Endothelial cell of umbilical vein (primary cell): ENCODE measurements at regions of chrX and their contacts with region 1.

Region 1: DNA sequence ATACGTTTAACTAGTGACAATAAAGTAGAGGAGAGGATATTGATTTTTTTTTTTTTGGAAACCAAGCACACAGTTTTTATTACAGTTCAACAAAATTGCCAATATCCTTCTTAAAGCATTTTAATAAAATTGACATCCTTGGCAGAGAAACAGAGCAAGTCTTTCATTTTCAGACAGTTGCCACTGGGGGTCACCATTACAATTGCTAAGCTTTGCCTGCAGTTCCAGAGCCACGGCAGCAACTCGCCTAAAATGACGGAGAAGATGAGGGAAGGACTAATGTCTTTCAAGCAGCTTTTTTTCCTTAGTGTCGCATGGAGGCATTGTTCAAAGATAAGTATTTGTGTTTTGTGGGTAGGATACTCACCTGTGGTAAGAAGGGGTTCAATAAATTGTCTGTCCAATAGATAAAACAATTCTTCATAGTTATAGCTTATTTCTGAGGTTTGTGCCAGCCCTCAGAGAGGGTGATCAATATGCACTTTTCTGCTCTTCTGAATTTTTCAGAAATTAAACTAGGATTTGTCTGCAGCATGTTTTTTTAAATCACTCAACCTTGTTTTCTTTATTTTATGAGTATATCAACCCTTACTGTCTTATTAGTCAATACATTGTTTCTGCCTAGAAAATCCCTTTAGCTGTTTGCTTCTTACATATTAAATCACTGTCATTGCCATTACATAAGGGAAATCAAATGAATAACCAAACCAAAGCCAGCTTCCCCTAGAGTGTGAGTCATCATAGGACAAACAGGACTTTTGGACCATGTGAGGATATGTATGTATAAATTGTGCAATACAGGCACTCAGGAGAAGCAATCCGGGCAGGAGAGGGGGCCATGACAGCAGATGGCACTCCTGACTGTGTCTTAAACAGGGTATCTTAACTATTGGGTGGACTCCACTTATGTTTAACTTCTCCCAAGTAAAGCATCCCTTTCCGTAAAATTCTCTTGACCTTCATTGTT is 508.1 kb upstream of the ARX start:
- DNase-seq: peak; percentile 90
- H3K4me3 ChIP-seq: peak overlapping the region in 2 of 3 experiments; percentile 13 to 43
- H3K27ac ChIP-seq: peak overlapping the region; percentile 90
- H3K4me1 ChIP-seq: peaks cover 22% of the 10 kb centered on the region
- H3K27me3 ChIP-seq: no peaks in the 10 kb centered on the region
- CTCF ChIP-seq: peak; percentile 30 to 35
- POLR2A ChIP-seq: no peak

Region 2: DNA sequence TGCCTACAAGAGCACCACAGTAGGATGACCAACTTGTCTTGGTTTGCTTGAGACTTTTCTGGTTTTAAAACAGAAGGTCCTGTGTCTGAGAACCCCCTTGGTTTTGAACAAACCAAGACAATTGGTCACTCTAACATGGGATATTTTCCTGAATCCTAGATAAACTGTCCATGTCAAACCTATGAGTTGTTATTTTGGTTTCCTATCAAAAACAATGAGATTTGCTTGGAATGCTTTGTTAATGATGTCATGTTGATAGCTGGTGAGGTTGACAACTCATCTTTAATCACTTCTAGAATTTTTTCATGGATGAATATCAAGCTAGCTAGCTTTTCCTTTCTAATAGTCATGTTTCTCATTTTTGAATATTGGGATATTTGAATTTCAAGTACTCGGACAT is 10.2 kb after region 1 on chrX:
- CTCF ChIA-PET with region 1: interaction called, 11 read pairs
- POLR2A ChIA-PET with region 1: no interaction called
- dilution Hi-C with region 1: no loop called
- intact Hi-C with region 1: no loop called
- DNase-seq: peak; percentile 32
- H3K4me3 ChIP-seq: no peak overlapping the region
- H3K27ac ChIP-seq: peak overlapping the region; percentile 75
- H3K4me1 ChIP-seq: peaks cover 5% of the 10 kb centered on the region
- H3K27me3 ChIP-seq: no peaks in the 10 kb centered on the region
- CTCF ChIP-seq: no peak
- POLR2A ChIP-seq: no peak

Region 3: DNA sequence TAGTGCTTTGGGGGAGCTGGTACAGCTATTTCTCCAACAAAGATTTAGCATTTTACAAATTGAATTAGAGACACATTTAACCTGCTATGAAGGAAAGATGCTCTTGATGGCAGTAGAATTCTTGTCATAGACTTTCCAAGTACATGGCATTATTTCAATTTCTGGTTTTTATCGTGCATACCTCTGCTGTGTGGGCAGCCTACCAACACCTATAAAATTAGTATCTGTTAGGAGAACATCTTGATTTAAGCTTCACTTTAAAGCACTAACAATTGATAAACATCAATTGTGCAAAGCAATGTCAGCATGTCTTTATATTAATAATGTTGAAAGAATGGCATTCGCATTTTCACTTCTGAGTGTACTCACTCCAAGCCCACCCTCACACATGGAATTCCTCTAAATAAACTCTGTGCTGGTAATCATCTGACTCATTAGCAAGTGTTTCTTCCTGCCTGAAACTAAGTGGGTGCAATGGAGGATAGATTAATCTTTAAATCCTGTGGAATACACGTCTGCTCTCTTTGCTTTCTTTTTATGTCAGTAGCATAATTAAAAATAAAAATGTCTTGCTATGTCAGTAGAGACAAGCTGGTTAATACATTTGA is 334.5 kb after region 1 on chrX:
- CTCF ChIA-PET with region 1: interaction called, 17 read pairs
- POLR2A ChIA-PET with region 1: no interaction called
- dilution Hi-C with region 1: no loop called
- intact Hi-C with region 1: no loop called
- DNase-seq: peak; percentile 73
- H3K4me3 ChIP-seq: no peak overlapping the region
- H3K27ac ChIP-seq: peak overlapping the region; percentile 45
- H3K4me1 ChIP-seq: peaks cover 5% of the 10 kb centered on the region
- H3K27me3 ChIP-seq: no peaks in the 10 kb centered on the region
- CTCF ChIP-seq: peak; percentile 13 to 16
- POLR2A ChIP-seq: no peak

Region 4: GRCh38 chrX:25941087-25941486 is 417.2 kb after region 1 on chrX:
- CTCF ChIA-PET with region 1: no interaction called
- POLR2A ChIA-PET with region 1: no interaction called
- dilution Hi-C with region 1: no loop called
- intact Hi-C with region 1: loop called (anchors 1 kb)
- DNase-seq: peak; percentile 61
- H3K4me3 ChIP-seq: peak overlapping the region in 1 of 3 experiments; percentile 43
- H3K27ac ChIP-seq: peak overlapping the region; percentile 96
- H3K4me1 ChIP-seq: peaks cover 27% of the 10 kb centered on the region
- H3K27me3 ChIP-seq: no peaks in the 10 kb centered on the region
- CTCF ChIP-seq: no peak
- POLR2A ChIP-seq: no peak

Region 5: DNA sequence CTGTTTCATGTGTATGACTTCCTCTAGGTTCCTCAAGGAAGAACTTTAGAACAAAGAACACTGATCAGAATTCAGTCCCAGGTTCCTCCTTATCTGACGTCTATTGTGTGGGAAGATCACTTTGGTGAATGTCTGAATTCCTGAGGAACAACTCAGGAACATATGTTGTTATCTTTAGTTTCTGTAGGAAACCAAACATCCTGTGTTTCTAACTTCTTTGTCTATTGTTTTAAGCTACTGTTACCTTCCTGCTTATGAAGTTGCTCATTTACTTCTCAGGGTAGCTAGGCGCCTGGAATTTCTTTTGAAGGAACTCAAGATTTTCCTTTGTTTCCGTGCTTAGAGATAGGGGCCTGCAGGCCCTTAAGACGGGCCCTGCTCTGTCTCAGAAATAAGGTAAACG is 738.3 kb after region 1 on chrX:
- CTCF ChIA-PET with region 1: interaction called, 3 read pairs
- POLR2A ChIA-PET with region 1: no interaction called
- dilution Hi-C with region 1: no loop called
- intact Hi-C with region 1: loop called (anchors 1 kb)
- DNase-seq: peak; percentile 91
- H3K4me3 ChIP-seq: no peak overlapping the region
- H3K27ac ChIP-seq: peak overlapping the region; percentile 99
- H3K4me1 ChIP-seq: peaks cover 23% of the 10 kb centered on the region
- H3K27me3 ChIP-seq: no peaks in the 10 kb centered on the region
- CTCF ChIP-seq: no peak
- POLR2A ChIP-seq: peak; percentile 41

Region 6: GRCh38 chrX:26649534-26649933 is 1125.7 kb after region 1 on chrX:
- CTCF ChIA-PET with region 1: interaction called, 10 read pairs
- POLR2A ChIA-PET with region 1: no interaction called
- dilution Hi-C with region 1: no loop called
- intact Hi-C with region 1: loop called (anchors 5 kb)
- DNase-seq: no peak
- H3K4me3 ChIP-seq: no peak overlapping the region
- H3K27ac ChIP-seq: no peak overlapping the region
- H3K4me1 ChIP-seq: no peaks in the 10 kb centered on the region
- H3K27me3 ChIP-seq: no peaks in the 10 kb centered on the region
- CTCF ChIP-seq: peak; percentile 8 to 21
- POLR2A ChIP-seq: no peak

Region 7: GRCh38 chrX:27309406-27309805 is 1785.5 kb after region 1 on chrX:
- CTCF ChIA-PET with region 1: no interaction called
- POLR2A ChIA-PET with region 1: no interaction called
- dilution Hi-C with region 1: no loop called
- intact Hi-C with region 1: loop called (anchors 10 kb)
- DNase-seq: peak; percentile 89
- H3K4me3 ChIP-seq: no peak overlapping the region
- H3K27ac ChIP-seq: peak overlapping the region; percentile 77
- H3K4me1 ChIP-seq: peaks cover 21% of the 10 kb centered on the region
- H3K27me3 ChIP-seq: no peaks in the 10 kb centered on the region
- CTCF ChIP-seq: no peak
- POLR2A ChIP-seq: no peak